Activated T-helper 2 cell treated with anti-CD3 and anti-CD28 coated beads, Interferon-gamma antibody, Interleukin-2, Interleukin-4, amounts not matched to agents 10 μg/mL and 5 μg/mL and 100 μg/mL, durations not matched to agents 14 hours and 24 hours and 36 hours (primary cell): ENCODE measurements at regions of chr1 and their contacts with region 1.

Region 1: GRCh38 chr1:172699111-172699510 is 40.2 kb downstream of the FASLG start:
- DNase-seq: peak; percentile 72
- H3K4me3 Mint-ChIP-seq: peak overlapping the region; percentile 41
- H3K27ac Mint-ChIP-seq: peak overlapping the region; percentile 91
- H3K4me1 Mint-ChIP-seq: peaks cover 54% of the 10 kb centered on the region
- H3K27me3 Mint-ChIP-seq: no peaks in the 10 kb centered on the region

Region 2: GRCh38 chr1:172278478-172278877 is 420.6 kb before region 1 on chr1:
- intact Hi-C with region 1: loop called (anchors 10 kb)
- DNase-seq: no peak
- H3K4me3 Mint-ChIP-seq: no peak overlapping the region
- H3K27ac Mint-ChIP-seq: no peak overlapping the region
- H3K4me1 Mint-ChIP-seq: peaks cover 31% of the 10 kb centered on the region
- H3K27me3 Mint-ChIP-seq: no peaks in the 10 kb centered on the region

Region 3: DNA sequence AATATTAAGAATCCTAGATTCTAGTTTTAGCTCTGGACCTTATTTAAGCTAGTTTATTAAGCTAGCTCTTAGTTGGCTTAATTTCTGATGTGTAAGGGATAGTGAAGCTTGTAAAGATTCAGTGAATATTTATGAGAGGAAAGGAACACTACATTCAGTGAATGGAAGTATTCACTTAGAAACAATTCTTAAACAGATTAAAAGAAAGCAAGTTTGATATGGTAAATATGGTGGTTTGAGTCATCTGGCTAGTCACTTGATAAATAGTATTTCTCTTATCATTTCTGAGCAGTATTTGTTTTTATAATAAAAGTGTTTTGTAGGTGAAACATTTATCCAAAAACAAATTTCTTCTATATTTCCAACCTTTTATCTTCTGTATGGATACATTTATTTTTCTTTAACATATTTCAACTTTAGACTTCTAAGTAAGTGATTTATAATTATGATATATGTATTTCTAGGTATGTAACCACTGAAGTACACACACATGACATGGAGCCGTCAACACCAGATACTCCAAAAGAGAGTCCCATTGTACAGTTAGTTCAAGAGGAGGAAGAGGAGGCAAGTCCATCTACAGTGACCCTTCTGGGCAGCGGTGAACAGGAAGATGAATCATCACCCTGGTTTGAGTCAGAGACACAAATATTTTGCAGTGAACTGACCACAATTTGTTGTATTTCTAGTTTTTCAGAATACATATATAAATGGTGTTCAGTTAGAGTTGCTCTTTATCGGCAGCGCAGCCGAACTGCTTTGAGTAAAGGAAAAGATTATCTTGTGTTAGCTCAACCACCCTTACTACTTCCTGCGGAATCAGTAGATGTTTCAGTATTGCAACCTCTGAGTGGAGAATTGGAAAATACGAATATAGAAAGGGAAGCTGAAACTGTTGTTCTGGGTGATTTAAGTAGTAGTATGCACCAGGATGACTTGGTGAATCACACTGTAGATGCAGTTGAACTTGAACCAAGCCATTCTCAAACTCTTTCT is 110.5 kb before region 1 on chr1:
- intact Hi-C with region 1: loop called (anchors 1 kb)
- DNase-seq: no peak
- H3K4me3 Mint-ChIP-seq: no peak overlapping the region
- H3K27ac Mint-ChIP-seq: peak overlapping the region; percentile 72
- H3K4me1 Mint-ChIP-seq: peaks cover 28% of the 10 kb centered on the region
- H3K27me3 Mint-ChIP-seq: no peaks in the 10 kb centered on the region

Region 4: GRCh38 chr1:172670791-172671190 is 28.3 kb before region 1 on chr1:
- intact Hi-C with region 1: loop called (anchors 1 kb)
- DNase-seq: no peak
- H3K4me3 Mint-ChIP-seq: no peak overlapping the region
- H3K27ac Mint-ChIP-seq: peak overlapping the region; percentile 61
- H3K4me1 Mint-ChIP-seq: peaks cover 77% of the 10 kb centered on the region
- H3K27me3 Mint-ChIP-seq: no peaks in the 10 kb centered on the region

Region 5: GRCh38 chr1:172837816-172838680 is 138.9 kb after region 1 on chr1:
- intact Hi-C with region 1: loop called (anchors 2 kb)
- DNase-seq: no peak
- H3K4me3 Mint-ChIP-seq: no peak overlapping the region
- H3K27ac Mint-ChIP-seq: no peak overlapping the region
- H3K4me1 Mint-ChIP-seq: peaks cover 29% of the 10 kb centered on the region
- H3K27me3 Mint-ChIP-seq: peaks cover 53% of the 10 kb centered on the region